ENCODE measurements at regions of chr12 and their contacts with region 1.

Region 1: GRCh38 chr12:9741726-9742125 is 8.8 kb upstream of the CLECL1 start:
- DNase-seq: peak; percentile 54
- CTCF ChIP-seq: no peak

Region 2: DNA sequence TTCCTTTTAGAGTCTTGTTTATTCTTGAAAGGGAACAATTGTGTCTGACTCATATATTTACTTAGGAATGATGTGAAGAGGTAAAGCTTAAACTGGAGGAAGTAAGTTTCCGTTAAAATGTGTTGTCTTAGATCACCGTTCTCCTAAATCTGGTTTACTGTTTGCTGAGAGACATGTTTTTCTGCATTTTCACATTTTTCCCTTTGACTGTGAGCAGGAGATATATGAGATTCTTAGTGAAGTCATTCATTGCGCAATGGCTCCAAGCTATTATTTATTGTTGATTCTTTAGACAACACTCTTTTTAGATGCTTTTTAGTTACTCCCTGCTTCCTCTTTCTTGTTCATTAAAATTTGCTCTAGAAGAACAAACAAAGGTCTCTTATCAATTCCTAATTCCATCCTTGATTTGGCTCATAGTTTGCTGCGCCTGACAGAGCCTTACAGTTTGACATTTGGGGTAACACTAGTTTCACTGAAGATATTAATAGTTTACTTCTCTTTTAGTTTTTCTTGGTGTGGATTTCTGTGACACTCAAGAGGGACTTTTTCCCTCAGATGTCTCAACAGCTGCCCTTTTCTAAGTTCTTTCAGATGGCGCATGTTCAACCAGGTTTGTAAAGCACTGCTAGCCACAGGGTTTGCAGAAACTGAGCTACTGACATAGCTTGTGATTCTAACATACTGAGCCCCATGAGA is 20.2 kb before region 1 on chr12:
- CTCF ChIA-PET with region 1: interaction called, 11 read pairs
- POLR2A ChIA-PET with region 1: no interaction called
- DNase-seq: peak; percentile 47
- CTCF ChIP-seq: no peak

Region 3: DNA sequence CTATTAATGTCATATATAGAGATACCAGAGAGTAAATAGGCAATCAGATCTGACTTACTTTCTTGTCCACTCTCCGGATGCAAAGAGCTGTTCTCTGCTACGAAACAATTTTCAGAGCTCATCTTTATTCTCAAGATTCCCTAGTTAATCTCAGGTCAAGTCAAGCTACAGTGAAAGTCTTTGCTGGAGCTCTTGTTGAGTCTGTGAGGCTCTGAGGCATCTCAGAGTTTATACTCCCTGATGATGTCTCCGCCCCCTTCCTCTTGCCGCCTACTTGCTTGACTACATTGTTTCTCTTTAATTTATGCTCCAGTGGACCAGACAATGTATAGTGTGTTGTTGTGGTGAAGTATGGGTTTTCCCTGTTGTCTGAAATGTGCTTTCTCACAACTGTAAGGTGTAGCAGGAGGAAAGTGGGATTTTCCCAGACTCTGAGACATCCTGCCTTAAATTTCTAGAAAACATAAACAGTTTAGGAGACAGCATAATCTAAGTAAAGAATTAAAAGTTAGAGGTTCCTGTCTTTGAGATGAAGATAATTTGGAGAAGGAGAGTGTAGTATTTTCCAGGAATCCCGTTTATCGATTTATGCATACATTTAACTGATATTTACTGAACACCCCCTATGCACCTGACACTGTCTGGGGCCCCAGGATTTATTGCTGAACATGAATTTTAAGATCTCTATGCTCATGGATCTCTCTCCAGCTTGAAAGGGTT is 19.1 kb after region 1 on chr12 and contains the start of gene CD69:
- CTCF ChIA-PET with region 1: interaction called, 40 read pairs
- POLR2A ChIA-PET with region 1: interaction called, 3 read pairs
- DNase-seq: peak; percentile 42
- CTCF ChIP-seq: no peak